Natural killer cell (primary cell): ENCODE measurements at regions of chr20 and their contacts with region 1.

Region 1: GRCh38 chr20:62953839-62954703 is 1.6 kb downstream of the SLC17A9 start:
- DNase-seq: peak; percentile 60 to 88
- ATAC-seq: peak; percentile 78 to 90 (median 86)
- H3K4me3 ChIP-seq: peak overlapping the region; percentile 35
- H3K4me3 Mint-ChIP-seq: peak overlapping the region; percentile 84
- H3K27ac ChIP-seq: peak overlapping the region; percentile 97
- H3K27ac Mint-ChIP-seq: peak overlapping the region; percentile 89 to 93
- H3K4me1 ChIP-seq: peaks cover 51% of the 10 kb centered on the region
- H3K4me1 Mint-ChIP-seq: peaks cover 21 to 30% of the 10 kb centered on the region in 2 donors
- H3K27me3 ChIP-seq: no peaks in the 10 kb centered on the region
- H3K27me3 Mint-ChIP-seq: no peaks in the 10 kb centered on the region
- CTCF ChIP-seq: no peak

Region 2: DNA sequence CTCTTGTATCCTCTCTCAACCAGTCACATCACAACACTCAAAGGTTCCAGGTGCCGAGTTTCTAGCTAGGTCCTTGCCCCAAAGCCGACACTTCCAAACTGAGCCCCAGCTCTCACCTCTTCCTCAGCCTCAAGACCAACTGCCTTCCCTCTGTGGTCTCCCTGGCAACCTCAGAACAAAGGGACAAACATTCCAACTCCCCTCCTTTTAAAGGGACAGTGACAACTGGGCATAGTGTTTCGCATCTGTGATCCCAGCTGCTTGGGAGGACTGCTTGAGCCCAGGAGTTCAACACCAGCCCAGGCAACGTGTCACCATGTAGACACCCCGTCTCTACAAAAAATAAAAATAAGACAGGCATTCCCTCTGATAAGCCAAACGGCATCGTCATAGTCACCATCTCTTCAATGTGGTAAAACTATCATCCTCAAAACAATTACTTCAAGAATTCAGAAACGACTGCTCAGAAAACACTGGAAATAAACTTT is 39.1 kb before region 1 on chr20:
- intact Hi-C with region 1: loop called (anchors 5 kb)
- DNase-seq: peak in 1 of 2 donors; percentile 60
- ATAC-seq: peak in 2 of 3 donors; percentile 14 to 36
- H3K4me3 ChIP-seq: no peak overlapping the region
- H3K4me3 Mint-ChIP-seq: peak overlapping the region; percentile 14
- H3K27ac ChIP-seq: no peak overlapping the region
- H3K27ac Mint-ChIP-seq: peak overlapping the region; percentile 89 to 90
- H3K4me1 ChIP-seq: peaks cover 43% of the 10 kb centered on the region
- H3K4me1 Mint-ChIP-seq: peaks cover 81 to 86% of the 10 kb centered on the region in 2 donors
- H3K27me3 ChIP-seq: no peaks in the 10 kb centered on the region
- H3K27me3 Mint-ChIP-seq: no peaks in the 10 kb centered on the region
- CTCF ChIP-seq: no peak